Breast epithelium (tissue), 4 donors: ENCODE measurements at regions of chr11 and their contacts with region 1.

Region 1: GRCh38 chr11:4809246-4809645 is 5.1 kb upstream of the OR52R1 start:
- DNase-seq: no peak
- H3K4me3 ChIP-seq: no peak overlapping the region
- H3K27ac ChIP-seq: no peak overlapping the region
- H3K4me1 ChIP-seq: no peaks in the 10 kb centered on the region
- H3K27me3 ChIP-seq: no peaks in the 10 kb centered on the region
- CTCF ChIP-seq: no peak
- POLR2A ChIP-seq: no peak

Region 2: GRCh38 chr11:2860636-2861035 is 1948.6 kb before region 1 on chr11:
- intact Hi-C with region 1: no loop called
- DNase-seq: no peak
- H3K4me3 ChIP-seq: no peak overlapping the region
- H3K27ac ChIP-seq: no peak overlapping the region
- H3K4me1 ChIP-seq: peaks cover 0 to 8% of the 10 kb centered on the region in 2 donors
- H3K27me3 ChIP-seq: peaks cover 0 to 8% of the 10 kb centered on the region in 2 donors
- CTCF ChIP-seq: no peak
- POLR2A ChIP-seq: no peak

Region 3: DNA sequence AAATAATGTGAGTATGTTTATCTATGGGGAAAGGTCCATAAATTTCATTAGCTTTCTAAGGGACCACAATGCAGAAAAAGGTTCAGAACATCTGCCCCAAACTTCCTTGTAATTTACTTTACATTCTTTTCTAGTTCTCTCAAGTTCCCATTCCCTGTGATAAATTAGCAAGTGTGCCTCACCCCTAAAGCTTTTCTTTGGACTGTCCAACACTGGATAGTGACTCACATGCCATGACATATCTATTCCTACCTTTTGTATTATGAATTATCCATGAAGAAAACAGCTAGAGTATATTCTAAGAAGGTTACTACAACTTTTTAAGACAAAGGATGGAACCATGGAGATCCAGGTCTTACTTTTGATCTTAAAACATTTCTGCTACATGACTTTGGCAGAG is 41.2 kb before region 1 on chr11:
- intact Hi-C with region 1: no loop called
- DNase-seq: no peak
- H3K4me3 ChIP-seq: no peak overlapping the region
- H3K27ac ChIP-seq: no peak overlapping the region
- H3K4me1 ChIP-seq: no peaks in the 10 kb centered on the region
- H3K27me3 ChIP-seq: no peaks in the 10 kb centered on the region
- CTCF ChIP-seq: no peak
- POLR2A ChIP-seq: no peak

Region 4: GRCh38 chr11:4798427-4799183 is 10.6 kb before region 1 on chr11:
- intact Hi-C with region 1: loop called (anchors 1 kb)
- DNase-seq: no peak
- H3K4me3 ChIP-seq: no peak overlapping the region
- H3K27ac ChIP-seq: no peak overlapping the region
- H3K4me1 ChIP-seq: no peaks in the 10 kb centered on the region
- H3K27me3 ChIP-seq: no peaks in the 10 kb centered on the region
- CTCF ChIP-seq: no peak
- POLR2A ChIP-seq: no peak

Region 5: DNA sequence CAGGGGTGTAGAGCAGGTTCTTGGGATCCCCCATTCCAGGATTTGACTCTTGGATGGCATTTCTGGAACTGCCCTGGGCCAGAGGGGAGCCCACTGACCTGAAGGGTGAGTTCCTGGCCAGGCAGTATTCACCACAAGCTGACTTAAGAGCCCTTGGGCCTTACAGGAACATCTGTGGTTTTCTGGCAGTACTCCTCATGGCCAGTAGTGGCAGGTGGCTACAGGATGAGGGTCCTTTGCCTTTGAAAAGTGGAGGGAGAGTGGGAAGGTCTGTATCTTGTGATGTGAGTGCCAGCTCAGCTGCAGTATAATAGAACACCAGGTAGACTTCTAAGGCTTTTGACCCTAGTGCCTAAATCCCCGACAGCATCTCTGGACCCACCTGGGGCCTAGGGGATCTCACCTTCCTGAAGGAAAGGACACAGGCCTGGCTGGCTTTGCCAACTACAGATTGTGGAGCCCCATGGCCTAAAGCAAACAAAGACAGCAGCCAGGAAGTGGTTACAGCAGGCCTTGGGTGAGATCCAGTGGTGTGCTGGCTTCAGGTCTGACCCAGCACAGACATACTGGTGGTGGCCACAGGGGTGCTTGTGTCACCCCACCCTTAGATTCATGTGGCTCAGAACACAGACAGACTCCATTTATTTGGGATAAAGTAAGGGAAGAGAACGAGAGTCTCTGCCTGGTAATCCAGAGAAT is 30.8 kb after region 1 on chr11:
- intact Hi-C with region 1: loop called (anchors 2 kb)
- DNase-seq: no peak
- H3K4me3 ChIP-seq: no peak overlapping the region
- H3K27ac ChIP-seq: no peak overlapping the region
- H3K4me1 ChIP-seq: no peaks in the 10 kb centered on the region
- H3K27me3 ChIP-seq: no peaks in the 10 kb centered on the region
- CTCF ChIP-seq: no peak
- POLR2A ChIP-seq: no peak